Pancreas (tissue), 10 donors: ENCODE measurements at regions of chr17 and their contacts with region 1.

Region 1: GRCh38 chr17:78925234-78925633 is at the start of gene TIMP2:
- DNase-seq: peak; percentile 80 to 95 (median 90)
- ATAC-seq: peak; percentile 46 to 68 (median 52)
- H3K4me3 ChIP-seq: peak within 1 kb of the TSS; percentile 57 to 74 (median 73)
- H3K27ac ChIP-seq: peak within 1 kb of the TSS; percentile 57 to 91 (median 86)
- H3K4me1 ChIP-seq: peaks cover 18 to 32% (median 21%) of the 10 kb centered on the region in 3 donors
- H3K27me3 ChIP-seq: no peaks in the 10 kb centered on the region
- CTCF ChIP-seq: peak in 2 of 4 donors; percentile 18 to 19
- total RNA-seq, gene TIMP2: 39.9 to 128 (median 57.6) TPM

Region 2: DNA sequence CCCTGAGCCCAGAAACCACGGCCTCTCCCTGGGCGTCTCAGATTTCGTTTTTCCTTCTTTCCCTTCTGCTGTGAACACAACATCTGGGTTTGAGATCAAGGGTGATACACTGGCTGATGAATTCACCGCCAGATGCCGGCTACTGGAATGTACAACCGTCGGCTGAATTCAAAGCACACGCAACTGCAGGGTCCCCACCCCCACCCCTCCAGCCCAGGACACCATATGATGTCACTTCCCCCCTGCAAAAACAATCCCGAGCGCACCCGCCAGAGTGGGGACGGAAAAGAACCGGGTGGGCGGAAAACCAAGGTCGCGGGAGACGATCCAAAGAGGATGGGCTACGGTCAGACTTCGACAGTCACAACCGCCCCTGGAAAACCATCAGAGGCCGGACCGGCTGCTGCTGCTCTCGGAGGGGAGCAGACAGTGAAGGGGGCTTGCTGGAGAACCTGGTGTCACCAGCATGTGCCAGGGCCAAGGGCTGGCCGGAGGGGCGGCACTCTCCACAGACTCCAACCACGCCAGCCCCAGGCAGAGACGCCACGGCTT is 45.5 kb before region 1 on chr17:
- intact Hi-C with region 1: loop called in 2 of 3 experiments (anchors 10 kb)
- DNase-seq: peak in 4 of 6 donors; percentile 42 to 66 (median 54)
- ATAC-seq: no peak
- H3K4me3 ChIP-seq: no peak overlapping the region
- H3K27ac ChIP-seq: peak overlapping the region in 3 of 4 donors; percentile 42 to 71 (median 63)
- H3K4me1 ChIP-seq: peaks cover 21 to 35% (median 24%) of the 10 kb centered on the region in 3 donors
- H3K27me3 ChIP-seq: no peaks in the 10 kb centered on the region
- CTCF ChIP-seq: no peak

Region 3: GRCh38 chr17:79090443-79091225 is 165.4 kb after region 1 on chr17:
- intact Hi-C with region 1: no loop called
- DNase-seq: peak in 1 of 6 donors; percentile 71
- ATAC-seq: peak in 1 of 4 donors; percentile 35
- H3K4me3 ChIP-seq: no peak overlapping the region
- H3K27ac ChIP-seq: no peak overlapping the region
- H3K4me1 ChIP-seq: no peaks in the 10 kb centered on the region
- H3K27me3 ChIP-seq: peaks cover 0 to 3% (median 0%) of the 10 kb centered on the region in 4 donors
- CTCF ChIP-seq: peak in 1 of 4 donors; percentile 19